ENCODE measurements at regions of chr7 and their contacts with region 1.

Region 1: GRCh38 chr7:5088906-5089305 is 43.2 kb downstream of the RBAK start:
- DNase-seq: no peak
- H3K4me3 Mint-ChIP-seq: no peak overlapping the region
- H3K27ac Mint-ChIP-seq: no peak overlapping the region
- H3K4me1 Mint-ChIP-seq: peaks cover 3% of the 10 kb centered on the region
- H3K27me3 Mint-ChIP-seq: peaks cover 5% of the 10 kb centered on the region

Region 2: DNA sequence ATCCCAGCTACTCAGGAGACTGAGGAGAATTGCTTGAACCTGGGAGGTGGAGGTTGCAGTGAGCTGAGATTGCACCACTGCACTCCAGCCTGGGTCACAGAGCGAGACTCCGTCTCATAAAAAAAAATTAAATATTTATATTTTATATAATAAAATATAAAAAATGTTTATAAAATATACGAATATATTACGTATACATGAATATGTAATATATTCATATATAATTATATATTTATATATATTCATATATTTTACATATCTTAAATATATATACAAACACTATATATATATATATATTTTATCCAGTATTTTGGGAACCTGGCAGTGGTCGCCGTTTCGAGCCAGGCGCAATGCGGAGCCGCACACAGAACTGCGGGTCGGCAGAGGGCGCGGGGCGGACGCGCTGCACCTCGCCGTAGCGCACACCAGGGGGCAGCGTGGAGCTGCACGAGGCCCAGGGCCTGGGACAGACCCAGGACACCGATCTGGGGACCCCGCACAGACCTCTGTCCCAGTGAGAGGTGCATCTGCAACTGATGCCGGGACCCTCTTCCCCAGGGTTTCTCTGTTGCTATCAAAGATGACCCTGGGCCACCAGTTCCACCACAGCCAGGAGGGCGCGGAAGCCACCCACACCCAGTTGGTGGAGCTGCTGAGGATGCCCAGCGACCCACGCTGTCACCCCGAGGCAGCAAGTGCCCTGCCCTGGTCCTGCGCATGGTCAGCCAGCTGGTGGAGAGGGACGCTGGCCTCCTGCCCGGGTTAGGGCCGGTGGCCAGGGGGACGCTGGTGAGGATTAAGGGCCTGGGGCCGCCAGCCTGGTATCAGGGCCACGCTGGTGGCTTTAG is 290.8 kb before region 1 on chr7:
- CTCF ChIA-PET with region 1: interaction called, 33 read pairs
- POLR2A ChIA-PET with region 1: no interaction called
- DNase-seq: peak; percentile 64
- H3K4me3 Mint-ChIP-seq: no peak overlapping the region
- H3K27ac Mint-ChIP-seq: no peak overlapping the region
- H3K4me1 Mint-ChIP-seq: no peaks in the 10 kb centered on the region
- H3K27me3 Mint-ChIP-seq: no peaks in the 10 kb centered on the region

Region 3: DNA sequence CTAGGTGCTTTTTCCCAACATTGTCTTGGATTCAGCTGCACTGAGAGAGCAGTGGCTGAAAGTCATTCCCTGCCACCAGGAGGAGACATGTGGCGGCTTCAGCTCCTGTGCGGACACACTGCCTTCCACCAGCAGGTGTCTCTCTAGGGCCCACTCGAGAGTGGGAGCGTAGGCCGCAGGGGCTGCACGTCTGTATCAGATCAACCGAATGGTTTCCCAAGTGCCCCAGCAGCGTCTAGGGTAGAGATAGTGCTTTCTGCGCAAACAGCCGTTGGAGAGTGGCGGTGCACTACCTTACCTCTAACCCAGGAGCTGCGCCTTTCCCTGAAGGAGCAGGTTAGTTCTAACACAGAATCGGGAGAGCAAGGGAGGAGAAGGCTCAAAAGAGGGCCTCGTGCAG is 258.7 kb before region 1 on chr7:
- CTCF ChIA-PET with region 1: interaction called, 23 read pairs
- POLR2A ChIA-PET with region 1: no interaction called
- DNase-seq: peak; percentile 51
- H3K4me3 Mint-ChIP-seq: no peak overlapping the region
- H3K27ac Mint-ChIP-seq: no peak overlapping the region
- H3K4me1 Mint-ChIP-seq: peaks cover 1% of the 10 kb centered on the region
- H3K27me3 Mint-ChIP-seq: peaks cover 5% of the 10 kb centered on the region